AG04450 (cell line): ENCODE measurements at regions of chr10 and their contacts with region 1.

Region 1: DNA sequence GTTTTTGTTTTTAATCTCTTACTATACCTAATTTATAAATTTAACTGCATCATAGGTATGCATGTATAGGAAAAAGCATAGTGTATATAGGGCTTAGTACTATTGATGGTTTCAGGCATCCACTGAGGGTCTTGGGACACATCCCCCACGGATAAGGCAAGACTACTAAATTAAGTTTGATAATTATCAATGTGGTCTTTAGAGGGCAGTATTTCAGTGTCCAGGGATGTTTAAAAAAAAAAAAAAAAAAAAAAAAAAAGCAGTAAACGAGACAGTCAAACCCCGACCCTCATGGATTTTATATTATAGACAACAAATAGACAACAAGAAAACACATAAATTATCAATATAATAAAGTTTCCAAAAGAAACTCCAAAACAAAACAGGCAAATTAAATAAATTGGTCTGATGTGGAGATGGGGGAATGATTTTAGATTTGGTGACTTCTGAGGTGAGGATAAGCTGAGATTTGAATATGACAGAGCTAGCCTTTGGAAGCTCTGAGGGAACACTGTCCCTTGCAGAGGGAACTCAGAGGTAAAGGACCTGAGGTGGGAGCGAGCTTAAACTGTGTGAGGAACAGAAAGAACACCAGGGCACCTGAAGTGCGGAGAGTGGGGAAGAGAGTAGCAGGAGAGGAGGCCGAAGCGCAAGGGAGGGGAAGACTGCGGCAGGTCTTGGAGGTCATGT is 14.8 kb downstream of the ACSM6 start:
- DNase-seq: no peak
- H3K4me3 ChIP-seq: no peak overlapping the region
- H3K27ac ChIP-seq: no peak overlapping the region
- H3K27me3 ChIP-seq: no peaks in the 10 kb centered on the region
- CTCF ChIP-seq: peak; percentile 56

Region 2: GRCh38 chr10:95183271-95184230 is 25.3 kb before region 1 on chr10:
- CTCF ChIA-PET with region 1: interaction called, 11 read pairs
- POLR2A ChIA-PET with region 1: no interaction called
- DNase-seq: peak; percentile 58
- H3K4me3 ChIP-seq: peak overlapping the region; percentile 65
- H3K27ac ChIP-seq: no peak overlapping the region
- H3K27me3 ChIP-seq: peaks cover 8% of the 10 kb centered on the region
- CTCF ChIP-seq: peak; percentile 81

Region 3: GRCh38 chr10:95394161-95394880 is 185.5 kb after region 1 on chr10:
- CTCF ChIA-PET with region 1: no interaction called
- POLR2A ChIA-PET with region 1: no interaction called
- DNase-seq: no peak
- H3K4me3 ChIP-seq: no peak overlapping the region
- H3K27ac ChIP-seq: no peak overlapping the region
- H3K27me3 ChIP-seq: no peaks in the 10 kb centered on the region
- CTCF ChIP-seq: no peak